PC-3 (cell line): ENCODE measurements at regions of chr19 and their contacts with region 1.

Region 1: DNA sequence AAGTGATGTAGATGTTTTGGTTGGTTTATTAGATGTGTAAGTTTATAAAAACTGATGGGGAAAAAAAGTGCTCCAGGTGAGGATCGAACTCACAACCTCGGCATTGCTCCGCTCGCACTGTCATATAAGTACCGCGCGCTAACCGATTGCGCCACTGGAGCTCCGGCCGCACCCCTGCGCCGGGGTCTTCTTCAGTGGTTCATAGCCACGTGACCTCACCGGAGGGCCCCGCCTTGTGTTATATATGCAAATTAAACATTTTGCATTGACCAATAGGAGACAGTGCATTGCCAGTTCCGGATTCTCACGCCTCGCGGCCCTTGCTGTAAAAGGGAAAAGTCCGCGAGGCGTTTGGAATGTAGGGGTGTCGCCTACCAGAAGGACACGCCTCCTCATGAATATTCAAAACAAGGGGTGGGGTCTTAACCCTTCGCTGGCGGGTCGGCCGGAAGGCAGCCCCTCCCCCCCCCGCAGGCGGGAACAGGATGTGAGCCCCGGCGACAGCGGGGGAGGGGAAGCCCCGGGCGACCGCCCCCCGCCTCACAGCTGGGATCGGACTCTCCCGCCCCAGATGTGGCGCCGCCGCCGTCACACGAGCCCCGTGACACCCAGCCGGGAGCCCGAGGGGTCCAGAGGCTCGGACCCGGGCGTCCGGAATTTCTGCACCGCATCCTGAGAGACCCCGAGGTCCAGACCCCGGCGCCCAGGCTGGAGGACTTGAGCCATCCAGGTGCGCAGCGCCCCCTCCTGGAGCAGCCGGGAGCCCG is at the start of gene PLEKHG2:
- DNase-seq: peak; percentile 98
- ATAC-seq: peak; percentile 62
- H3K4me3 ChIP-seq: peak within 1 kb of the TSS; percentile 93
- H3K27ac ChIP-seq: peak within 1 kb of the TSS; percentile 83
- H3K4me1 ChIP-seq: peaks cover 30% of the 10 kb centered on the region
- H3K27me3 ChIP-seq: no peaks in the 10 kb centered on the region
- CTCF ChIP-seq: peak; percentile 73
- total RNA-seq, gene PLEKHG2: 8.3 and 10.6 TPM in 2 replicates

Region 2: DNA sequence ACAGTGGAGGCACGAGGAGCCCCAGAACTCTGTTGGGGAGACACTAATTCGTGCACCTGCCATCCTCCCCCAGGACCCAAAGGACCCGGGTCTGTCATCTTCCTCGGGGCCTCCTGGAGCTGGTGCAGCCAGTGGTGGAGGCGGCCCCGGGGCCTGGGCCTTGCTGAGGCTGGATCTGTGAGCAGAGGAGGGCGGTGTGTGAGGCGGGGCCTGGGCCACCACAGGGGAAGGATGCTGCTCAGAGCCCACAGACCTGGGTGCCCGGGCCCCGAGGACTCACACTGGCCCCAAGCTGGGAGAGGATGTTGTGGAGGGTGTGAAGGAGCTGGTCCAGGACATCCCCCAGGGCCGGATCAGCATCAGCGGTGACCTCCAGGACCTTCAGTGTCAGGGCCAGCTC is 175.8 kb before region 1 on chr19:
- CTCF ChIA-PET with region 1: interaction called, 10 read pairs
- POLR2A ChIA-PET with region 1: no interaction called
- intact Hi-C with region 1: no loop called
- DNase-seq: no peak
- ATAC-seq: no peak
- H3K4me3 ChIP-seq: no peak overlapping the region
- H3K27ac ChIP-seq: no peak overlapping the region
- H3K4me1 ChIP-seq: no peaks in the 10 kb centered on the region
- H3K27me3 ChIP-seq: no peaks in the 10 kb centered on the region
- CTCF ChIP-seq: no peak

Region 3: DNA sequence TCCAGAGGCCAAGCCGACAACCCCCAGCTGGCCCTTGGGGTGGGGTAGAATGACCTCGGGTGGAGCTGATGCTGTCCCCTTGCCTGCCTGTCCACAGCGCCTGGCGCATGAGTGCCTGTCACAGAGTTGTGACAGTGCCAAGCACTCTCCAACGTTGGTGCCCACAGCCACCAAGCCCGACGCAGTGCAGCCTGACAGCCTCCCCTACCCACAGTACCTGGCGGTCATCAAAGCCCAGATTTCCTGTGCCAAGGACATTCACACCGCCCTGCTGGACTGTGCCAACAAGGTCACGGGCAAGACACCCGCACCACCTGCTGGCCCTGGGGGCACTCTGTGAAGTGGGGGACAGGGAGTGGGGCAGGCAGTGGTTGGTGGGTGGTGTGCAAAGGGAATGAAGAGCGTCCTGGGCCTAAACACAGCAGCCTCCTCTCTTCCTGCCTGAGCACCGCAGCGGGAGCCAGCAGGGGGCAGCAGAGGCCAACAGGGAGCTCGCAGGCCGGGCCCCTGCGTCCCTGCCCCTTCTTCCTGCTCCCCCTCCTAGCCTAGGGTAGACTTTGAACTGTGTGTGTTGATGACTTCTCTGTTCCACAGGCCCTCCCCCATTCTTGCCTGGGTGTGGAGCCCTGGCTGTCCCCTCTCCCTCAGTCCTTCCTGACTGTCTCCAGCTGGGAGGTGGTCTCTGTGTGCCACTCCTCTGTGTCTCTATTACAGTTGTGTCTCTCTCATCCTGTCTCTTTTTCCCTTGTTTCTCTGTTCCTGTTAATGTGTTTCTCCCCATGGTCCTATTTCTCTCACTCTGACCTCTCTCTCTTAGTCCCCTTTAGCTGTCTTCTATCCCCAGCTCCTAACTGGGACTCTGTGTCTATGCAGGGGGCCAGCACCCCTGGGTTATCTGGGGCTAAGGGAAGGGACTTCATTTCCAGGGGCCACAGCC is 14.7 kb before region 1 on chr19:
- CTCF ChIA-PET with region 1: interaction called, 3 read pairs
- POLR2A ChIA-PET with region 1: interaction called, 4 read pairs
- intact Hi-C with region 1: loop called (anchors 1 kb)
- DNase-seq: peak; percentile 78
- ATAC-seq: peak; percentile 64
- H3K4me3 ChIP-seq: no peak overlapping the region
- H3K27ac ChIP-seq: peak overlapping the region; percentile 68
- H3K4me1 ChIP-seq: peaks cover 30% of the 10 kb centered on the region
- H3K27me3 ChIP-seq: no peaks in the 10 kb centered on the region
- CTCF ChIP-seq: peak; percentile 82

Region 4: GRCh38 chr19:39430675-39431593 is 18.7 kb after region 1 on chr19:
- CTCF ChIA-PET with region 1: no interaction called
- POLR2A ChIA-PET with region 1: interaction called, 5 read pairs
- intact Hi-C with region 1: loop called (anchors 2 kb)
- DNase-seq: peak; percentile 93
- ATAC-seq: peak; percentile 82
- H3K4me3 ChIP-seq: no peak overlapping the region
- H3K27ac ChIP-seq: peak overlapping the region; percentile 100
- H3K4me1 ChIP-seq: peaks cover 25% of the 10 kb centered on the region
- H3K27me3 ChIP-seq: no peaks in the 10 kb centered on the region
- CTCF ChIP-seq: no peak

Region 5: DNA sequence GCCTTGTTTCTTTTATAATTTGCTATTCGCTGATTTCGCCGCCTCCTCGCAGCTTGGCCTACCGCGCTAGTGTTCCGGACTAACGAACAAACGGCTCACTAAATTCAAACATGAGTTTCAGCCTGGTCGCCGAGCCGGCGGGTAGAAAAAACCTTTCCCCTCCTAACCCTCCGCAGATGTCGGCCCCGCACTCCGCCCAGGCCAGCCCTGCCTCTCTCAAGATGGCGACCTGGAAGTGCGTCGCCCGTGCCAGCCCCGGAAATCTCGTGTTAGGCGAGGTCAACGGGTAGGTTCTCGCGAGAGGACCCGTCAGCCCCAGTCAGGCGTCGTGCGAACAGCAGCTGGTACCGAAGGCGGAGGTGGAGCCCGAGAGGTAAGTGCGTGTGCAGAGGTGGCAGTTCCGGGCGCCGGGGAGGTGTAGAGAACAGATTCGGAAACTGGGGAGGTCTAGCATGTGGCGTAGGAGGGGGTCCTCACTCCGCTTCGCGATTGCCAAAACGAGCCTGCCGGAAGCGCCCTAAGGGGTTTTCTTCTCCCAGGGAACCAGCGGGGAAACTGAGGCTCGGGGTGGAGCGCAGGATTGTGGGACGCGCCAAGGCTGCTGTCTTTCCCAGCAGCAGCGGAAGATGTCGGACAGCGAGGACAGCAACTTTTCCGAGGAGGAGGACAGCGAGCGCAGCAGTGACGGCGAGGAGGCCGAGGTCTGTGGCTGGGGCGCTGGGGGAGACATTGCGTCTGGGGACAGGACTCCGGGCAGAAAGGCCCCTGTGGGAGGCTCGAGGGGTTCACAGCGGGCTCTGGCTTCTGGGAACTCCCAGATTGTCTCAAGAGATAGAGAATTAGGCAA is 33.2 kb after region 1 on chr19 and contains the start of gene SUPT5H:
- CTCF ChIA-PET with region 1: no interaction called
- POLR2A ChIA-PET with region 1: no interaction called
- intact Hi-C with region 1: no loop called
- DNase-seq: peak; percentile 96
- ATAC-seq: peak; percentile 90
- H3K4me3 ChIP-seq: peak within 1 kb of the TSS; percentile 93
- H3K27ac ChIP-seq: peak within 1 kb of the TSS; percentile 79
- H3K4me1 ChIP-seq: peaks cover 30% of the 10 kb centered on the region
- H3K27me3 ChIP-seq: no peaks in the 10 kb centered on the region
- CTCF ChIP-seq: no peak
- total RNA-seq, gene SUPT5H: 59.9 and 95.0 TPM in 2 replicates